CD4-positive, alpha-beta memory T cell (primary cell): ENCODE measurements at regions of chr6 and their contacts with region 1.

Region 1: DNA sequence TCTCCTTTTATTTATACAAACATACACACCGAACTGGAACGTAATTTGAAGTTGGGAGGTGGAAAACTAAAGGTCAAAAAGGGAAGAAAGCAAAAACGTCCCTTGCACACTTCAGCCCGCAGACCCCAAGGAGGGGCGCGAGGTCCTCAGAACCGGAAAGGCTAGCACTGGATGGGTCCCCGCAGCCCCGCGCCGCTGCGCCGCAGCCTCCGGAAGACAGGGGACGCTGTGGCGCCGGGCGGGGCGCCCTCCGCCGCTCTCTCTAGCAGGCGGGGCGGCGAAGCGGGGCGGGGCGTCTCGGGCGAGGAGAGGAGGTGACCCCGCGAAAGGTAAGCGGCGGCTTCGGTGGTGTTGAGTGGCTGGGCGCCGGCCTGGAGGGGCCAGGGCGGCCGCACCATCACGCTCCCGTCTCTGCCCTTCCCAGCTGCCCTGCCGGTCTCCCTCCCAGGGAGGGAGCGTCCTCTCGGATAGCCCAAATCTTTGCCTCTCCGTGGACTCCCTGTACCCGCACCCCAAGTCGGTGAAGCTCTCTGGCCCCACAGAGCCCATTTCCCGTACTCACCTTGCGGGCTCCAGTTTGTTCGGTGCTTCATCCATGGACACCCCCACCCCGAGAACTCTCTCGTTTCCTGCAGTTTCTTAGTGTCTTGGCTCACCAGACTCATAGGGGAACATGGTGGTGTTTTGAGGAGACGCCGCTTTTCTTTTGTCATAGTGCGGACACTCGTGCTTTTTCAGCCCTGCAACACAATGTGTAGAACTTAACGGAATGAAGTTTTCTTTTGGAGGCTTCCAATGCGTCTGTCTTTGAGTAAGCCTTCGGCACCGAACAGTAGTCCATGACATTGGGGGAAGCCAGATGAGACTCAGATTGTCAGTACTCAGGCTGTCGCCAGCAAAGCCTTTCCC is at the start of gene SMIM8:
- DNase-seq: peak; percentile 79 to 85 (median 83)
- H3K4me3 ChIP-seq: peak within 1 kb of the TSS; percentile 88 to 92
- H3K4me3 Mint-ChIP-seq: peak within 1 kb of the TSS; percentile 94 to 99 (median 98)
- H3K27ac ChIP-seq: peak within 1 kb of the TSS; percentile 70
- H3K27ac Mint-ChIP-seq: peak within 1 kb of the TSS; percentile 75 to 97 (median 96)
- H3K4me1 ChIP-seq: no peaks in the 10 kb centered on the region
- H3K4me1 Mint-ChIP-seq: peaks cover 8 to 28% (median 15%) of the 10 kb centered on the region in 4 donors
- H3K27me3 ChIP-seq: no peaks in the 10 kb centered on the region
- H3K27me3 Mint-ChIP-seq: peaks cover 2 to 3% of the 10 kb centered on the region in 2 donors
- total RNA-seq, gene SMIM8: 11.1 to 12.5 TPM

Region 2: GRCh38 chr6:87139236-87139635 is 183.3 kb before region 1 on chr6:
- CTCF ChIA-PET with region 1: interaction called, 3 read pairs
- POLR2A ChIA-PET with region 1: no interaction called
- intact Hi-C with region 1: loop called (anchors 1 kb)
- DNase-seq: peak; percentile 50 to 71 (median 68)
- H3K4me3 ChIP-seq: no peak overlapping the region
- H3K4me3 Mint-ChIP-seq: no peak overlapping the region
- H3K27ac ChIP-seq: no peak overlapping the region
- H3K27ac Mint-ChIP-seq: peak overlapping the region in 1 of 7 donors; percentile 80
- H3K4me1 ChIP-seq: no peaks in the 10 kb centered on the region
- H3K4me1 Mint-ChIP-seq: peaks cover 0 to 4% (median 3%) of the 10 kb centered on the region in 4 donors
- H3K27me3 ChIP-seq: no peaks in the 10 kb centered on the region
- H3K27me3 Mint-ChIP-seq: peaks cover 5 to 6% of the 10 kb centered on the region in 2 donors

Region 3: GRCh38 chr6:87407901-87408720 is 85.6 kb after region 1 on chr6 and contains the start of gene CFAP206:
- CTCF ChIA-PET with region 1: no interaction called
- POLR2A ChIA-PET with region 1: no interaction called
- intact Hi-C with region 1: loop called (anchors 5 kb)
- DNase-seq: peak; percentile 79 to 88 (median 85)
- H3K4me3 ChIP-seq: peak within 1 kb of the TSS; percentile 75 to 84
- H3K4me3 Mint-ChIP-seq: peak within 1 kb of the TSS; percentile 88 to 96 (median 89)
- H3K27ac ChIP-seq: peak within 1 kb of the TSS; percentile 67
- H3K27ac Mint-ChIP-seq: peak within 1 kb of the TSS; percentile 83 to 93 (median 89)
- H3K4me1 ChIP-seq: peaks cover 11% of the 10 kb centered on the region
- H3K4me1 Mint-ChIP-seq: peaks cover 4 to 13% (median 5%) of the 10 kb centered on the region in 4 donors
- H3K27me3 ChIP-seq: no peaks in the 10 kb centered on the region
- H3K27me3 Mint-ChIP-seq: peaks cover 4 to 10% of the 10 kb centered on the region in 2 donors
- total RNA-seq, gene CFAP206: 0.25 TPM in 1 of 2 experiments, not detected in the other

Region 4: GRCh38 chr6:87431273-87431672 is 108.7 kb after region 1 on chr6:
- CTCF ChIA-PET with region 1: no interaction called
- POLR2A ChIA-PET with region 1: no interaction called
- intact Hi-C with region 1: no loop called
- DNase-seq: no peak
- H3K4me3 ChIP-seq: no peak overlapping the region
- H3K4me3 Mint-ChIP-seq: no peak overlapping the region
- H3K27ac ChIP-seq: no peak overlapping the region
- H3K27ac Mint-ChIP-seq: no peak overlapping the region
- H3K4me1 ChIP-seq: no peaks in the 10 kb centered on the region
- H3K4me1 Mint-ChIP-seq: no peaks in the 10 kb centered on the region
- H3K27me3 ChIP-seq: no peaks in the 10 kb centered on the region
- H3K27me3 Mint-ChIP-seq: peaks cover 6 to 8% of the 10 kb centered on the region in 2 donors

Region 5: GRCh38 chr6:87472525-87473418 is 150.2 kb after region 1 on chr6 and contains the start of gene SLC35A1:
- CTCF ChIA-PET with region 1: interaction called, 11 read pairs
- POLR2A ChIA-PET with region 1: interaction called, 9 read pairs
- intact Hi-C with region 1: no loop called
- DNase-seq: peak; percentile 80 to 92 (median 86)
- H3K4me3 ChIP-seq: peak within 1 kb of the TSS; percentile 67 to 72
- H3K4me3 Mint-ChIP-seq: peak within 1 kb of the TSS; percentile 97 to 99 (median 99)
- H3K27ac ChIP-seq: peak within 1 kb of the TSS; percentile 94
- H3K27ac Mint-ChIP-seq: peak within 1 kb of the TSS; percentile 93 to 100 (median 100)
- H3K4me1 ChIP-seq: peaks cover 18% of the 10 kb centered on the region
- H3K4me1 Mint-ChIP-seq: peaks cover 9 to 27% (median 16%) of the 10 kb centered on the region in 4 donors
- H3K27me3 ChIP-seq: no peaks in the 10 kb centered on the region
- H3K27me3 Mint-ChIP-seq: peaks cover 0 to 2% of the 10 kb centered on the region in 2 donors
- total RNA-seq, gene SLC35A1: 20.4 to 26.2 TPM

Region 6: DNA sequence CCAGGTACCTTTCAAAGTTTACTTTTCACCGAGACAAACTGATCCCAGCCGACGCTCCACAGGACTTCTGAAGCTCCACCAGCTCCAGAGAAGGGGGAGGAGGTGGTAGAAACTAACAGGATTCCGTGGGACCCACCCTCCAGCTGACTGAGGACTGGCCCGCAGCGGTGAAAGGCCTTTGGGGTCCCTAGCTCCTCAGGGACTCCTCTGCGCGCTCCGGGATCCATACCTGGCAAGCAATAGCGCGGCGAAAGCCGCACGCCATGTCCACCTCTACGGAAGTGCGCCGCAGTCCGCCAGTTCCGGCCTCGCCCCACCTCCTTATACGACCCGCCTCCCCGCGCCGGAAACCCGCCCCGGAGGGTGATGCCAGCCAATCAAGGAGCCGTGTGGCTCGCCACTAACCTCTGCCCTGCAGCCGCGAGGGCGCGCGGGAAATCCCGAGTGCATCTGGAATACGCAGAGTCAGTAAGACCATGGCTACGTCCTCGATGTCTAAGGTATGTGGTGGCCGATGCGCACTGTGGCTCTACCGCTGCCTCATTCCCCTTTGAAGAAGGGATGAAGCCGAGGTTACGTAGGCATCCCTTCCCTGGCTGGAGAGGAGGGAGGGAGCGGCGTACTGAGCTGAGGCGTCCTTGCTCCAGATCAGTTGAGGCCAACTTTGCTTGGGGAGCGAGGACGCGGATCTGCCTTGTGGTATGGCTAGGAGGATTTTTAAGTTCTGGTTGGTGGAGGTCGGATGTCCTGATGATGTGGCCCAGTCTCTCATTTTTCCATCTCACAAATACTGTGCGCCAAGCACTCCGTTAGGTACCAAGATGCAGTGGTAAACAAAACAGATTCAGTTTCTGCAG is 267.4 kb after region 1 on chr6 and contains the starts of genes ORC3 and RARS2:
- CTCF ChIA-PET with region 1: no interaction called
- POLR2A ChIA-PET with region 1: no interaction called
- intact Hi-C with region 1: loop called (anchors 5 kb)
- DNase-seq: peak; percentile 91 to 95 (median 93)
- H3K4me3 ChIP-seq: peak within 1 kb of the TSS; percentile 80 to 97
- H3K4me3 Mint-ChIP-seq: peak within 1 kb of the TSS; percentile 94 to 97 (median 96)
- H3K27ac ChIP-seq: peak within 1 kb of the TSS; percentile 84
- H3K27ac Mint-ChIP-seq: peak within 1 kb of the TSS; percentile 87 to 98 (median 95)
- H3K4me1 ChIP-seq: peaks cover 49% of the 10 kb centered on the region
- H3K4me1 Mint-ChIP-seq: peaks cover 44 to 75% (median 56%) of the 10 kb centered on the region in 4 donors
- H3K27me3 ChIP-seq: no peaks in the 10 kb centered on the region
- H3K27me3 Mint-ChIP-seq: no peaks in the 10 kb centered on the region
- total RNA-seq, gene ORC3: 30.4 to 30.7 TPM
- total RNA-seq, gene RARS2: 38.8 to 39.3 TPM